ENCODE measurements at regions of chr2 and their contacts with region 1.

Region 1: GRCh38 chr2:30336978-30337841 is 105.9 kb downstream of the LBH start:
- DNase-seq: peak; percentile 89
- H3K4me3 Mint-ChIP-seq: peak overlapping the region; percentile 68
- H3K27ac Mint-ChIP-seq: peak overlapping the region; percentile 94
- H3K4me1 Mint-ChIP-seq: peaks cover 77% of the 10 kb centered on the region
- H3K27me3 Mint-ChIP-seq: no peaks in the 10 kb centered on the region

Region 2: GRCh38 chr2:30225131-30225762 is 112.0 kb before region 1 on chr2:
- intact Hi-C with region 1: loop called (anchors 1 kb)
- DNase-seq: peak; percentile 88
- H3K4me3 Mint-ChIP-seq: peak overlapping the region; percentile 89
- H3K27ac Mint-ChIP-seq: peak overlapping the region; percentile 98
- H3K4me1 Mint-ChIP-seq: peaks cover 63% of the 10 kb centered on the region
- H3K27me3 Mint-ChIP-seq: no peaks in the 10 kb centered on the region

Region 3: GRCh38 chr2:30252723-30253701 is 84.2 kb before region 1 on chr2:
- intact Hi-C with region 1: no loop called
- DNase-seq: peak; percentile 83
- H3K4me3 Mint-ChIP-seq: peak overlapping the region; percentile 53
- H3K27ac Mint-ChIP-seq: peak overlapping the region; percentile 94
- H3K4me1 Mint-ChIP-seq: peaks cover 72% of the 10 kb centered on the region
- H3K27me3 Mint-ChIP-seq: no peaks in the 10 kb centered on the region

Region 4: GRCh38 chr2:30273261-30273861 is 63.8 kb before region 1 on chr2:
- intact Hi-C with region 1: loop called (anchors 1 kb)
- DNase-seq: no peak
- H3K4me3 Mint-ChIP-seq: peak overlapping the region; percentile 71
- H3K27ac Mint-ChIP-seq: peak overlapping the region; percentile 99
- H3K4me1 Mint-ChIP-seq: peaks cover 72% of the 10 kb centered on the region
- H3K27me3 Mint-ChIP-seq: no peaks in the 10 kb centered on the region

Region 5: GRCh38 chr2:30348825-30349224 is 11.6 kb after region 1 on chr2:
- intact Hi-C with region 1: loop called (anchors 1 kb)
- DNase-seq: no peak
- H3K4me3 Mint-ChIP-seq: no peak overlapping the region
- H3K27ac Mint-ChIP-seq: peak overlapping the region; percentile 81
- H3K4me1 Mint-ChIP-seq: peaks cover 13% of the 10 kb centered on the region
- H3K27me3 Mint-ChIP-seq: no peaks in the 10 kb centered on the region

Region 6: GRCh38 chr2:30421604-30422443 is 84.6 kb after region 1 on chr2:
- intact Hi-C with region 1: loop called (anchors 1 kb)
- DNase-seq: peak; percentile 76
- H3K4me3 Mint-ChIP-seq: peak overlapping the region; percentile 62
- H3K27ac Mint-ChIP-seq: peak overlapping the region; percentile 89
- H3K4me1 Mint-ChIP-seq: peaks cover 34% of the 10 kb centered on the region
- H3K27me3 Mint-ChIP-seq: no peaks in the 10 kb centered on the region

Region 7: GRCh38 chr2:30711646-30712085 is 374.5 kb after region 1 on chr2:
- intact Hi-C with region 1: loop called (anchors 10 kb)
- DNase-seq: peak; percentile 96
- H3K4me3 Mint-ChIP-seq: no peak overlapping the region
- H3K27ac Mint-ChIP-seq: peak overlapping the region; percentile 67
- H3K4me1 Mint-ChIP-seq: peaks cover 15% of the 10 kb centered on the region
- H3K27me3 Mint-ChIP-seq: peaks cover 6% of the 10 kb centered on the region